Naive thymus-derived CD4-positive, alpha-beta T cell (primary cell): ENCODE measurements at regions of chr12 and their contacts with region 1.

Region 1: DNA sequence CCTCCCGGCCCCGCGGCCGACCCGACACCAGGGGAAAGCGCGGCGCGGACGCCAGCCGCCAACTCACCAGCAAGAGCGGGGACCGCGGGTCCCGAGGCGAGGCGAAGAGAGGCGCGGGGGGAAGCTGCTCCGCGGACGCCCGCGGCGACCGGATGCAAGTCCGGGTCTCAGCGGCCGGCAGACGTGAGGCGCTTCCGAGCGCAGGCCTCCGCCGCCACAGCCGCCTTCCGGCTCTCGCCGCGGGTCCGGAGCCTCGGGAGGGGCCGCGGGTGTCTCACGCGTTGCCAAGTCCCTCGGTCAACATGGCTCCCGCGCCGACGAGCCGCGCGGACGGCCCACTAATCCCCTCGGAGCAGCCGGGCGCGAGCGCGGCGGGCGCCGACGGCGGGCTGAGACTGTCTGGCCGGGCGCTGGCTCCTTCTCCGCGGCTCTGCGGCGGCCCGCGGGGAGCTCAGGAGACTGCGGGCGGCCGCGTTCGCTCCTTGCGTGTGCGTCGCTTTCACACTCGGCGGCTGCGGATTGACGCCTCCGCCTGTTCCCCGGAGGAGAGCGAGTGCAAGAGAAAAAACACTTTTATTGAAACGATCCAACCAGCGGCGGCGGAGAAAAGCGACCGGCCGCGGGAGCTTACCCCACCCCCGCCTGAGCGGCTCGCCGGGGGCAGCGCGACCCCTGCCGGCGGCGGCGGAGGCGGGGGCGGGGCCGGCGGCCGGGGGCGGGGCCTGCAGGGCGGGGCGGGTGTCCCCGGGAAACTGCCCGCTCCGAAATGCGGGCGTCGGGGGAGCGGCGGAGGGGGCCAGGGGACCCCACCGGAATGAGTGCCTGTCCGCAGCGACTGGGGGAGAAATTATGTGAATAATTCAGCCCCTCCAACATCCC is at the start of gene CDK17:
- DNase-seq: peak; percentile 87 to 93 (median 90)
- ATAC-seq: peak; percentile 87
- H3K4me3 ChIP-seq: peak within 1 kb of the TSS; percentile 82
- H3K4me3 Mint-ChIP-seq: peak within 1 kb of the TSS; percentile 94 to 98 (median 96)
- H3K27ac ChIP-seq: peak within 1 kb of the TSS; percentile 98
- H3K27ac Mint-ChIP-seq: peak within 1 kb of the TSS; percentile 96 to 99 (median 97)
- H3K4me1 ChIP-seq: peaks cover 19 to 22% of the 10 kb centered on the region in 2 donors
- H3K4me1 Mint-ChIP-seq: peaks cover 32 to 50% (median 44%) of the 10 kb centered on the region in 7 donors
- H3K27me3 ChIP-seq: no peaks in the 10 kb centered on the region
- H3K27me3 Mint-ChIP-seq: no peaks in the 10 kb centered on the region
- total RNA-seq, gene CDK17: 39.7 to 112 (median 67.9) TPM

Region 2: DNA sequence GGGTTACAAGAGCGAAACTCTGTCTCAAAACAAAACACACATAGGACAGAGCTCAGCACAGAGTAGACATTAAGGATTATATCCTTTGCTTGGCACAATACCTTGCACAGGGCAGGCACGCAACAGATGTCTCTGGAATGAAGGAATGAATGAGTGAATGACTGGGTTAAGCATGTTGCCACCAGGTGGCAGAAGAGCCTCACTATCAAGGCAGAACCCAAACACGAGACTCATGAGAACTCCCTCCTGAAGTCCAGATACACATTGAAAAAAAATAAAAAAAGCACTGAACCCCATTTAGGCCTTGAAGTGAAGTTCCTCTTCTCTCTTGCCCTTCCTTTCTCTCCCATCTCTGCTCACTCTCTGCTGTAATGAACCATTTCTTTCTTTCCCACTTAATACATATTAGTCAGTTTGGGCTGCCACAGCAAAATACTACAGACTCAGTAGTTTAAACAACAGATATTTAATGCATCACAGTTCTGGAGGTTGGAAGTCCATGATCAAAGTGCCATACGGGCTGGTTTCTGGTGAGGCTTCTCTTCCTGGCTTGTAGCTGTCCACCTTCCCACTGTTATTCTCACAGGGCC is 338.2 kb before region 1 on chr12:
- CTCF ChIA-PET with region 1: interaction called, 6 read pairs
- POLR2A ChIA-PET with region 1: no interaction called
- intact Hi-C with region 1: loop called (anchors 1 kb)
- DNase-seq: peak; percentile 39 to 79 (median 70)
- ATAC-seq: peak; percentile 94
- H3K4me3 ChIP-seq: no peak overlapping the region
- H3K4me3 Mint-ChIP-seq: no peak overlapping the region
- H3K27ac ChIP-seq: no peak overlapping the region
- H3K27ac Mint-ChIP-seq: peak overlapping the region in 2 of 9 donors; percentile 1 to 28
- H3K4me1 ChIP-seq: peaks cover 0 to 12% of the 10 kb centered on the region in 2 donors
- H3K4me1 Mint-ChIP-seq: peaks cover 8 to 31% (median 30%) of the 10 kb centered on the region in 7 donors
- H3K27me3 ChIP-seq: no peaks in the 10 kb centered on the region
- H3K27me3 Mint-ChIP-seq: no peaks in the 10 kb centered on the region

Region 3: GRCh38 chr12:96241846-96242256 is 158.3 kb before region 1 on chr12:
- CTCF ChIA-PET with region 1: interaction called, 6 read pairs
- POLR2A ChIA-PET with region 1: interaction called, 5 read pairs
- intact Hi-C with region 1: loop called in 1 of 2 experiments (anchors 1 kb)
- DNase-seq: peak in 8 of 9 donors; percentile 37 to 86 (median 81)
- ATAC-seq: peak; percentile 97
- H3K4me3 ChIP-seq: peak overlapping the region; percentile 28
- H3K4me3 Mint-ChIP-seq: peak overlapping the region; percentile 16 to 71 (median 58)
- H3K27ac ChIP-seq: peak overlapping the region; percentile 73
- H3K27ac Mint-ChIP-seq: peak overlapping the region; percentile 58 to 98 (median 91)
- H3K4me1 ChIP-seq: peaks cover 33 to 51% of the 10 kb centered on the region in 2 donors
- H3K4me1 Mint-ChIP-seq: peaks cover 33 to 70% (median 64%) of the 10 kb centered on the region in 7 donors
- H3K27me3 ChIP-seq: no peaks in the 10 kb centered on the region
- H3K27me3 Mint-ChIP-seq: no peaks in the 10 kb centered on the region

Region 4: GRCh38 chr12:96327346-96327745 is 72.8 kb before region 1 on chr12:
- CTCF ChIA-PET with region 1: no interaction called
- POLR2A ChIA-PET with region 1: interaction called, 6 read pairs
- intact Hi-C with region 1: loop called in 1 of 2 experiments (anchors 2 kb)
- DNase-seq: no peak
- ATAC-seq: peak; percentile 16
- H3K4me3 ChIP-seq: no peak overlapping the region
- H3K4me3 Mint-ChIP-seq: peak overlapping the region in 9 of 10 donors; percentile 4 to 76 (median 57)
- H3K27ac ChIP-seq: peak overlapping the region; percentile 52
- H3K27ac Mint-ChIP-seq: peak overlapping the region in 8 of 9 donors; percentile 69 to 92 (median 82)
- H3K4me1 ChIP-seq: peaks cover 9 to 43% of the 10 kb centered on the region in 2 donors
- H3K4me1 Mint-ChIP-seq: peaks cover 43 to 80% (median 61%) of the 10 kb centered on the region in 7 donors
- H3K27me3 ChIP-seq: no peaks in the 10 kb centered on the region
- H3K27me3 Mint-ChIP-seq: no peaks in the 10 kb centered on the region

Region 5: GRCh38 chr12:96375841-96376604 is 24.1 kb before region 1 on chr12:
- CTCF ChIA-PET with region 1: interaction called, 5 read pairs
- POLR2A ChIA-PET with region 1: interaction called, 89 read pairs
- intact Hi-C with region 1: loop called (anchors 1 kb)
- DNase-seq: no peak
- ATAC-seq: no peak
- H3K4me3 ChIP-seq: no peak overlapping the region
- H3K4me3 Mint-ChIP-seq: peak overlapping the region; percentile 53 to 91 (median 64)
- H3K27ac ChIP-seq: peak overlapping the region; percentile 72
- H3K27ac Mint-ChIP-seq: peak overlapping the region in 8 of 9 donors; percentile 74 to 98 (median 96)
- H3K4me1 ChIP-seq: peaks cover 46 to 70% of the 10 kb centered on the region in 2 donors
- H3K4me1 Mint-ChIP-seq: peaks cover 59 to 94% (median 74%) of the 10 kb centered on the region in 7 donors
- H3K27me3 ChIP-seq: no peaks in the 10 kb centered on the region
- H3K27me3 Mint-ChIP-seq: no peaks in the 10 kb centered on the region

Region 6: DNA sequence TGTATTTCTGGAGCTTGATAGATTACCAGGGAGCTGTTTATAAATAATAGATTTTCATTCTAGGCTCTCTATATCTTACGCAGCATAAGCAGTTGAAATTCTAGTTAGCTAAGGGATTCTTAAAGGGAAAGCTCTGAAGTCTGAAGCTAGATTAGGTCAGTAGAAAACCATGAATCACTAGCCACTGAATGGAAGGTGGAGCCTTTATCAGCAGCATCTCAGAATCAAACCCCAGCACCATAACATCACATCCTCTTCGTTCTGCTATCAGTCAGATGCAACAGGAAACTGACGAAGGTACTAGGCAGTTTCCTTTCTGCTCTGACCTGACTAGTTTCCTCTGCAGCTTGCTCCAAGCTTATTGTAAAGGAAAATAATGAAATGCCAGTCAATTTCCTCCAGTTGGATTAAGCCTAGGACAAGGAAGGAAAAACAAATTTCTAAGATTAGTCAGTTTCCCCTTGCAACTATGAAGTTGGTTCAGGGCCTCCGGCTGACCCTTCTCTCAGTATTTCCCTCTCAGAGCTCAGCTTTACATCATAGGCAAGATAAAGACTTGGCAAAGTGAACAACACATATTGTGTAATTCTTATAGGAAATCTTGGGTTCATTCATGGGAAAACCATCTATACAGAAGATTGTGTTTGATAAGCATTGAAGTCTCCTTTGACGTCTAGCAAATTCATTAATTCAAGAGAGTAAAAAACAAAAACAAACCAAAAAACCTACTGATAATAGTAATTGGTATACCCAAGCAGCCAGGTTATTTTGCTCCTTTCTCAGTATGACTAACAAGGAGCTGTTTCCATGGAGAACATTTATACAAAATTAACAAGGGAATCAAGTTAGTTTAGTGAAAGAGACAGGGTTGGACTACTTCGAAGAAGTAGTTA is 45.8 kb after region 1 on chr12:
- CTCF ChIA-PET with region 1: interaction called, 4 read pairs
- POLR2A ChIA-PET with region 1: interaction called, 17 read pairs
- intact Hi-C with region 1: loop called (anchors 1 kb)
- DNase-seq: peak in 8 of 9 donors; percentile 50 to 83 (median 78)
- ATAC-seq: peak; percentile 97
- H3K4me3 ChIP-seq: peak overlapping the region; percentile 10
- H3K4me3 Mint-ChIP-seq: peak overlapping the region; percentile 6 to 76 (median 63)
- H3K27ac ChIP-seq: peak overlapping the region; percentile 80
- H3K27ac Mint-ChIP-seq: peak overlapping the region; percentile 83 to 97 (median 92)
- H3K4me1 ChIP-seq: peaks cover 23 to 26% of the 10 kb centered on the region in 2 donors
- H3K4me1 Mint-ChIP-seq: peaks cover 17 to 55% (median 46%) of the 10 kb centered on the region in 7 donors
- H3K27me3 ChIP-seq: no peaks in the 10 kb centered on the region
- H3K27me3 Mint-ChIP-seq: no peaks in the 10 kb centered on the region

Region 7: GRCh38 chr12:96587691-96588090 is 187.5 kb after region 1 on chr12:
- CTCF ChIA-PET with region 1: no interaction called
- POLR2A ChIA-PET with region 1: no interaction called
- intact Hi-C with region 1: no loop called
- DNase-seq: no peak
- ATAC-seq: no peak
- H3K4me3 ChIP-seq: no peak overlapping the region
- H3K4me3 Mint-ChIP-seq: no peak overlapping the region
- H3K27ac ChIP-seq: no peak overlapping the region
- H3K27ac Mint-ChIP-seq: no peak overlapping the region
- H3K4me1 ChIP-seq: no peaks in the 10 kb centered on the region
- H3K4me1 Mint-ChIP-seq: no peaks in the 10 kb centered on the region
- H3K27me3 ChIP-seq: no peaks in the 10 kb centered on the region
- H3K27me3 Mint-ChIP-seq: peaks cover 0 to 29% (median 12%) of the 10 kb centered on the region in 5 donors

Region 8: DNA sequence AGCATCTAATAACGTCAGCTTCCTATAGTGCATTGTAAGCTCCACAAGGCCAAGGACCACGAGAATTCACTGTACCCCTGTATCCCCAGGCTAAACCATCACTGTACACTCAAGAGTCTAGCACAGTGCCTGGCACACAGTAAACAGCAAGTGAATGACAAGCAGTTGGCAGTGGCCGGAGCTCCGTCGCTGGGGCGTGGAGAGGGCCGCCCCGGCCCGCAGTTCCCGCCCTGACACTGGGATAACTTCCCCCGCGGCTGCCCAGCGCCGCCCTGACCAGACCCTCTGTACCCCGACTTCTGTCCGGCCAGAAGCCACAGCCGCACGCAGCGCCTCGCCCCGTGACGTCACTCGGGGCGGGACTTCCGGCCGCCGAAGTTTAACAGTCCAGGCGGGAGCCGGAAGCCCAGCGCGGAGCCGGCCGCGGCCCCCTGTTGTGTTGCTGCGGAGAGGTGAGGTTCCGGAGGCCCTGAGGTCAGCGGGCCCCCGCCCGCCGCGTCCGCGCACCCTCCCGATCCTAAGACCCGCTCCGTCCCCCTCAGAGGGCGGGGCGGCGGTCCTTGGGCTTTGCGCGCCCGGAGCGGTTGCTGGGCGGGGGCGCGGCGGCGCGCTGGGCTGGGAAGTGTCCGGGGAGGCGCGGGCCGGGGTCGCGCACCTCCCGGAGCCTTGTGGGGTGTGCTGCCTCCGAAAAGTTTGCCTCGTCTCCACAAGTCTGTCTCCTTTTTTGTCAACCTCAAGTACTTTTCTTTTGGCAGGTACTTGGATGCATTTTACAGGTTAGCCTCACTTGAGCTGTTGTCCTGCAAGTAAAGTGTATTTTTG is 506.9 kb after region 1 on chr12 and contains the start of gene NEDD1:
- CTCF ChIA-PET with region 1: no interaction called
- POLR2A ChIA-PET with region 1: interaction called, 3 read pairs
- intact Hi-C with region 1: loop called (anchors 2 kb)
- DNase-seq: peak; percentile 70 to 89 (median 81)
- ATAC-seq: peak; percentile 90
- H3K4me3 ChIP-seq: peak within 1 kb of the TSS; percentile 84
- H3K4me3 Mint-ChIP-seq: peak within 1 kb of the TSS; percentile 89 to 97 (median 95)
- H3K27ac ChIP-seq: peak within 1 kb of the TSS; percentile 99
- H3K27ac Mint-ChIP-seq: peak within 1 kb of the TSS; percentile 96 to 99 (median 98)
- H3K4me1 ChIP-seq: peaks cover 0 to 12% of the 10 kb centered on the region in 2 donors
- H3K4me1 Mint-ChIP-seq: peaks cover 21 to 53% (median 47%) of the 10 kb centered on the region in 7 donors
- H3K27me3 ChIP-seq: no peaks in the 10 kb centered on the region
- H3K27me3 Mint-ChIP-seq: peaks cover 0 to 12% (median 0%) of the 10 kb centered on the region in 5 donors
- total RNA-seq, gene NEDD1: 18.3 to 52.4 (median 23.2) TPM